Activated naive CD4-positive, alpha-beta T cell treated with anti-CD3 and anti-CD28 coated beads for 36 hours (primary cell): ENCODE measurements at regions of chr12 and their contacts with region 1.

Region 1: GRCh38 chr12:9813821-9814809 is 13.2 kb upstream of the KLRF1 start:
- DNase-seq: peak; percentile 93
- H3K4me3 Mint-ChIP-seq: peak overlapping the region; percentile 77
- H3K27ac Mint-ChIP-seq: no peak overlapping the region
- H3K4me1 Mint-ChIP-seq: peaks cover 9% of the 10 kb centered on the region
- H3K27me3 Mint-ChIP-seq: no peaks in the 10 kb centered on the region

Region 2: GRCh38 chr12:9449181-9449580 is 364.9 kb before region 1 on chr12:
- CTCF ChIA-PET with region 1: no interaction called
- intact Hi-C with region 1: no loop called
- DNase-seq: no peak
- H3K4me3 Mint-ChIP-seq: peak overlapping the region; percentile 93
- H3K27ac Mint-ChIP-seq: no peak overlapping the region
- H3K4me1 Mint-ChIP-seq: peaks cover 16% of the 10 kb centered on the region
- H3K27me3 Mint-ChIP-seq: no peaks in the 10 kb centered on the region

Region 3: DNA sequence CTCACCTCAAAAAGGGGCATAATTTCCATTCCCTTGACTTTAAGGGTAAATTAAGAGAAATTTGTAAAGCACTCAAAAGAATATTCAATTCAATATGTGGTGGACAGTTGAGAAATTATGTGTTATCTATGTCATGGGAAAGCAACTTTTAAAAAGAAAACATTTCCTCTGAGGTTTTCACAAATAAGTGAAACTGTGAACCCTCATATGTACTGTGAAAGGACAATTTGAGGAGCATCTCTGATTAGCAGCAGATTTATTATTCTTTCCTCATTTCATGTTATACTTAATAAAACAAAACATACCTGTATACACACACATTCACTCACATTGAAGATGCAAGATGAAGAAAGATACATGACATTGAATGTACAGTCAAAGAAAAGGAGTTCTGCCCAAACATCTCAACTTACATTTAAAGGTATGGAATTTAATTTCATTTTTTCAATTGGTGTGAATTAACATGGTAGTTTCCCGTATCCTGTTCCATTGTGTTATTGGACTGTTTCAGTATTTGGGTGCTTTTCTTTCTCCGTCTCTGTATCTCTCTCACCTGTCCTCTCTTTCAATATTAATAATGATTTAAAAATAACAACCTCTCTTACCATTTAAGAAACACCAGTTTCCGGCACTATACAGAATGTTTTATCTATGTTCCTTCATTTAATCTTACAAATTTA is 13.2 kb after region 1 on chr12 and contains the start of gene KLRF1:
- CTCF ChIA-PET with region 1: interaction called, 17 read pairs
- intact Hi-C with region 1: no loop called
- DNase-seq: no peak
- H3K4me3 Mint-ChIP-seq: no peak within 1 kb of the TSS
- H3K27ac Mint-ChIP-seq: no peak within 1 kb of the TSS
- H3K4me1 Mint-ChIP-seq: no peaks in the 10 kb centered on the region
- H3K27me3 Mint-ChIP-seq: no peaks in the 10 kb centered on the region
- total RNA-seq, gene KLRF1: not detected

Region 4: GRCh38 chr12:9925708-9926393 is 111.7 kb after region 1 on chr12:
- CTCF ChIA-PET with region 1: interaction called, 53 read pairs
- intact Hi-C with region 1: loop called (anchors 1 kb)
- DNase-seq: peak; percentile 9
- H3K4me3 Mint-ChIP-seq: peak overlapping the region; percentile 57
- H3K27ac Mint-ChIP-seq: peak overlapping the region; percentile 66
- H3K4me1 Mint-ChIP-seq: peaks cover 21% of the 10 kb centered on the region
- H3K27me3 Mint-ChIP-seq: peaks cover 2% of the 10 kb centered on the region

Region 5: DNA sequence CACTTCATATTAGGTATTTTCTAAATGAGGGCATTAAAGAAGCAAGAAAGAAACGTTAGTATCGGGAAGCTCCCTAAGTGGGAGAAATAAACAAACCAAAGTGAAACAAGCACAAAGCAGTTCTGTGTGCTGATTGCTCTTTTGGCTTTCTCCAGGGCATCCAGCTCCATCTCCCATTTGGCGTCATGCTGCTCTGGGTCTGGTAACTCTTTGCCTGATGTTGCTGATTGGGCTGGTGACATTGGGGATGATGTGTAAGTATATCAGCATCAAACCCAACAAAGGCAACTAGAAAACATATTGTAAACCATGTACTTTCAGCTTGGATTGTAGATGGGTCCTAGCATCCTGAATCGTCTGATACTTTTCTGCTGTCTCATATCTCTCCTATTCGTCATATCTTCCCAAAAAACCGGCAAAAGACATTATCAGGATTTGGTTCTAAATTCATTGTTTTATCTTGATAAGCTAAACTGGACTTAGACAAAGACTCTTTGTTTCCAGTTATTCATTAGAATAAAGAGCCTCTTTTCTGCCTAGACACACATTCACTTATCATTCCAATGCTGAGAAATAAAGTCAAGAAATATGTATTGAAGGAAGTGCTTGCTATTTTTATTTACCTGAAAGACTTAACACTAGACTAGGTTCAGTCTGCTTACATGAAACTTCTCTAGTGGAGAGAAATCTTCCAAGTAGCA is 198.7 kb after region 1 on chr12:
- CTCF ChIA-PET with region 1: interaction called, 12 read pairs
- intact Hi-C with region 1: loop called (anchors 1 kb)
- DNase-seq: no peak
- H3K4me3 Mint-ChIP-seq: no peak overlapping the region
- H3K27ac Mint-ChIP-seq: no peak overlapping the region
- H3K4me1 Mint-ChIP-seq: no peaks in the 10 kb centered on the region
- H3K27me3 Mint-ChIP-seq: peaks cover 6% of the 10 kb centered on the region

Region 6: DNA sequence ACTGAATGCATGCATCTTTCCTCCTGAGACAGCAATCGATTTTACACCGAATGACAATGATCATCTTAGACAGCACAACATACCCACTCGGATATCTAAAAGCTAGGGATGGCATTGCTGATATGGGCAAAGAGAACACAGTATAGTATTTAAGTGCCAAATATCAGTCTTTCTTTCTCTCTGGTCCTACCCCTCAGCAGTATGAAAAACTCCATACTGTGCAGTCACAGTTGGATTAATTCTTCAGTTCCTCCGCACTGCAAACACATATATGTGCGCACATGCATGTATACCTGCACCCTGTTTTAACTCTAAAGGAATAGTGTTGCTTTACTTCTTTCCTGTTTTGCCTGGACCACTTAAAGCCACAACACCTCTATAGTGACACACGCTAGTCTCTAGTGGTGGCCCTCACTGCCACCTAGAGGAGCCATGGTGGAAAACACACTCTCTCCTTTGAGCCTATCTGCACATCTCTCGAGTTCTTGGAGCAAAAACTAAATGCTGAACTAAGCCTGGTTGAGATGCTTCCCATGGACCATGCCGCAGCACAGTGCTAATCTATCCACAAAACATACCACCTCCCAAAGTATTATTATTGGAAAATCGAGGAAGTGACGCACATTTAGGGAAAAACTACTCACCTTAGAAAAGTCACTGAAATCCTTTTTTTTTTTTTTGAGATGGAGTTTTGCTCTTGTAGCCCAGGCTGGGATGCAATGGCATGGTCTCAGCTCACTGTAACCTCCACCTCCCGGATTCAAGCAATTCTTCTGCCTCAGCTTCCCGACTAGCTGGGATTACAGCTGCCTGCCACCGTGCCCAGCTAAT is 376.7 kb after region 1 on chr12:
- CTCF ChIA-PET with region 1: no interaction called
- intact Hi-C with region 1: loop called (anchors 5 kb)
- DNase-seq: peak; percentile 74
- H3K4me3 Mint-ChIP-seq: no peak overlapping the region
- H3K27ac Mint-ChIP-seq: no peak overlapping the region
- H3K4me1 Mint-ChIP-seq: peaks cover 4% of the 10 kb centered on the region
- H3K27me3 Mint-ChIP-seq: peaks cover 6% of the 10 kb centered on the region